ENCODE measurements at regions of chr10 and their contacts with region 1.

Region 1: DNA sequence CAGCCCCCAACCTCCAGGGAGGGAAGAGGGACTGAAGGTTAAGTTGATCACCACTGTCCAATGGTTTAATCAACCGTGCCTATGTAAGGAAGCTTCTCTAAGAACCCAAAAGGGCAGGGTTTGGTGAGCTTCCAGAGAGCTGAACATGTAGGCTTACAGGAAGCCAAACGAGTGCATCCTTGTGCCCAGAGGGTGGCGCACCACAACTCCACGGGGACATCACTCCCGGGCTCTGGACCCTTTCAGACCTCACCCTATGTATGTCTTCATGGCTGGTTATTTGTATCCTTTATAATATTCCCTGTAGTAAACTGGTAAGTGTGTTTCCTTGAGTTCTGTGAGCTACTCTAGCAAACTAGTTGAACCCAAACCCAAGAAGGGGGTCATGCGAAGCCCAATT is 11.5 kb upstream of the NFKB2 start:
- DNase-seq: no peak
- H3K4me3 Mint-ChIP-seq: no peak overlapping the region
- H3K27ac Mint-ChIP-seq: no peak overlapping the region
- H3K4me1 Mint-ChIP-seq: no peaks in the 10 kb centered on the region
- H3K27me3 Mint-ChIP-seq: peaks cover 4% of the 10 kb centered on the region

Region 2: DNA sequence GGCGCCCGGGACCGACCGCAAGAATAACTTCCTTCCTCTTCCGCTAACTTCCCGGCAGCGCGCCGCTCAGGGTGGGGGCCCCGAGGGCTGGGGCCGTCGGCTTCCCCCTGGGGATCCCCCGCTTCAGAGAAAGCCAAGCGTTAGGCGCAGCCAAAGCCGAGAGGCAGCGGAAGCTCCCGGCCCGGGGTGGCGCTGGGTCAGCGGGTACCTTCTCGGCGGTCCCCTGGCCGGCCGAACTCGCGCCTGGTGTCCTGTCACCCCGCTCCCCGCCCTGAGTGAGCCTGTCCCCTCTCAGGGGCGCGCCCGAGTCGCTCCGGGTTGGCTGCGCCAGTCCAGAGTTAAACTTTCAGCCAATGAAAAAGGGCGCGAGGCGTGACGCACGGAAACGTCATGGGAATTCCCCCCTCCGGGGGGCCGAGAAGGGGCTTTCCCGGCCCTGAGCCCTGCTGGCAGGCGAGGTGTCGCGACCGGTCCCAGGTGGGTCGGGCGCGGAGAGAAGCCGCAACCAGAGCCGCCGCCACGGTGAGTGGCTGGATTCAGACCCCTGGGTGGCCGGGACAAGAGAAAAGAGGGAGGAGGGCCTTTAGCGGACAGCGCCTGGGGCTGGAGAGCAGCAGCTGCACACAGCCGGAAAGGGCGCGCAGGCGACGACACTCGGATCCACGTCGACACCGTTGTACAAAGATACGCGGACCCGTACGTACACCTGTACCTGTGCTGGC is 10.2 kb after region 1 on chr10:
- CTCF ChIA-PET with region 1: interaction called, 12 read pairs
- DNase-seq: peak; percentile 99
- H3K4me3 Mint-ChIP-seq: peak overlapping the region; percentile 79
- H3K27ac Mint-ChIP-seq: peak overlapping the region; percentile 96
- H3K4me1 Mint-ChIP-seq: peaks cover 42% of the 10 kb centered on the region
- H3K27me3 Mint-ChIP-seq: peaks cover 10% of the 10 kb centered on the region